Gastrocnemius medialis (tissue), 4 donors: ENCODE measurements at regions of chrX and their contacts with region 1.

Region 1: GRCh38 chrX:150844016-150844415 is 54.5 kb downstream of the CD99L2 start:
- DNase-seq: no peak
- ATAC-seq: no peak
- H3K4me3 ChIP-seq: no peak overlapping the region
- H3K27ac ChIP-seq: peak overlapping the region; percentile 77 to 84 (median 80)
- H3K4me1 ChIP-seq: peaks cover 23 to 46% of the 10 kb centered on the region in 2 donors
- H3K27me3 ChIP-seq: no peaks in the 10 kb centered on the region
- CTCF ChIP-seq: no peak
- POLR2A ChIP-seq: no peak

Region 2: GRCh38 chrX:150536455-150537116 is 307.4 kb before region 1 on chrX:
- in situ Hi-C with region 1: no loop called
- intact Hi-C with region 1: no loop called
- DNase-seq: no peak
- ATAC-seq: no peak
- H3K4me3 ChIP-seq: no peak overlapping the region
- H3K27ac ChIP-seq: no peak overlapping the region
- H3K4me1 ChIP-seq: no peaks in the 10 kb centered on the region
- H3K27me3 ChIP-seq: no peaks in the 10 kb centered on the region
- CTCF ChIP-seq: no peak
- POLR2A ChIP-seq: no peak

Region 3: DNA sequence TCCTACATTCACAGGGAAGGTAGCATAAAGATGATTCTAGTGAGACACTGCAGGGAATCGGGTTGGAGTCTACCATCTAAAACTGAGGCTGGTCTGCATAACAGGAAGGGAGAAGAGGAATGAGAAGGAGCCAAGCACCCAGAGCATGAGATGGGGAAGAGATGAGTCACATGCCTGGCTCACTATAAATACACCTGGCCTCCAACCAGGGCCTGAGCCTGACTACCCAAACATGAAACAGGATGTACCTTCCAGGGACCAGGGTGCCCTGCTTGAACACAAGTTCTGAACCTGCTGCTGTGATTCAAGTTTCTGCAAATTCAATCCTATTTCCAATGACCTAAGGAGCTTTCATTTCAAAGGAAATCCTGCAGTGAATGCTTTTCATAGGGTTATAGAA is 29.6 kb after region 1 on chrX:
- in situ Hi-C with region 1: no loop called
- intact Hi-C with region 1: loop called (anchors 2 kb)
- DNase-seq: peak; percentile 76 to 91
- ATAC-seq: peak; percentile 61 to 68
- H3K4me3 ChIP-seq: peak overlapping the region in 2 of 4 donors; percentile 31 to 47
- H3K27ac ChIP-seq: peak overlapping the region; percentile 92 to 95 (median 94)
- H3K4me1 ChIP-seq: peaks cover 13 to 43% of the 10 kb centered on the region in 2 donors
- H3K27me3 ChIP-seq: no peaks in the 10 kb centered on the region
- CTCF ChIP-seq: no peak
- POLR2A ChIP-seq: peak in 1 of 2 donors; percentile 45

Region 4: DNA sequence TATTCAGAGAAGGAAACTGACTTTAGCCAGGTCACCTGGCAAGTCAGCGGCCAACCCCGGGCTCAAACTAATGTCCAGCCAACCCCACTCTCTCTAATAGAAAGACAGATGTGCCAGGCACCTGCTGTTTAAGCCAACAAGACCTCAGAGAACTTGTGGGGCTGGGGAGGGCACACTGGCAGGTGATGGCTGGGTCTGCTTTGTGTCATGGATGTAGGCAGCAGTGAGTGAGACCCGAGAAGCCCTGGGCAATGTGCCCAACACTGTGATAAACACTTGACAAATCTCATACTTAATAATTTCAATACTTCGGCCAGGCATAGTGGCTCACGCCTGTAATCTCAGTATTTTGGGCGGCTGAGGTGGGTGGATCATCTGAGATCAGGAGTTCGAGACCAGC is 63.5 kb after region 1 on chrX:
- in situ Hi-C with region 1: no loop called
- intact Hi-C with region 1: no loop called
- DNase-seq: no peak
- ATAC-seq: no peak
- H3K4me3 ChIP-seq: no peak overlapping the region
- H3K27ac ChIP-seq: no peak overlapping the region
- H3K4me1 ChIP-seq: no peaks in the 10 kb centered on the region
- H3K27me3 ChIP-seq: no peaks in the 10 kb centered on the region
- CTCF ChIP-seq: no peak
- POLR2A ChIP-seq: no peak